ENCODE measurements at regions of chr12 and their contacts with region 1.

Region 1: DNA sequence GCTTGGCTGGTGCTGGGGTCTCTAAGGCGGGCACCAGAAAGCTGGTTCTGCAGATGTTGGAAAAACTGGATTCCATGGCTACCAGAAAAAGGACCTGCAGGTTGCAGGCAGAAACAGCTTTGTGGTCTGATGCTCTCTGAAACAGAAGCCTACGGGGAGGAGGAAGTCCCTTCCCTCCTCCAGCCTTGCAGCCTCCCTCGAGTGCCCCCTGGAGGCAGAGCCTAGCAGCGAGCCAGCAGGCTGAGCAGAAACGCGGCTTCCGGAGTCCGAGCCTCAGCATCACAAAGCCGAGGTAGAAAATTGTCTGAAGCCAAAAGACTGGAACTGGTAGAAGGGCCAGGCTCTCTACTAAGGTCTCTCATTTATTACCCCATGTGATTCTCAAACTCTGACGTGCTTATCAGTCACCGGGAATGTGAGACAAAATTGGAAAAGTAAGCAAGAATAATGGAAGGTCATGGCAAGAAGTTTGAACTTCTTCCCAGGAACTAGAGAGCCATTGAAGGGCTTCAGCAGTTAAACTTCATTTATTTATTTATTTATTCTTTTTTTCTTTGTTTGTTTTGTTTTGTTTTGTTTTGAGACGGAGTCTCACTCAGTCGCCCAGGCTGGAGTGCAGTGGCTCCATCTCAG is 82.2 kb upstream of the CPSF6 start:
- DNase-seq: peak; percentile 90 to 95 (median 95)
- ATAC-seq: peak; percentile 99
- H3K4me3 ChIP-seq: no peak overlapping the region
- H3K4me1 ChIP-seq: peaks cover 4% of the 10 kb centered on the region
- CTCF ChIP-seq: peak; percentile 96

Region 2: DNA sequence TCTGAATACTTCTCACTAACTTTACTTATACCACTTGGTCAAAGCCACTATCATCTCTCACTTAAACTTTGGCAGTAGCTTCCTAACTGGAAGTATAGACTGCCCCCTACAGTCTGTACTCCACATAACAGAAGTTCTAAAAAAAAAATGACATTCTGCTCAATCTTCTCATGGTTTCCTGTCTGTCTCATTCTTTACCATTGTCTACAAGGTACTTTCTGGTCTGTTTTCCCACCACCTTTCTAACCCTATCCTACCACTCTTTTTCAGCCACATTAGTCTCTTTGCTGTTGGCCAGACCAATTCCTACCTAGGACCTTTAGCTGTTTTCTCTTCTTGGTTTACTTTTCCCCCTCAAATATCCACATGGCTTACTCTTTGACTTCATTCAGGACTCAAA is 96.9 kb after region 1 on chr12:
- intact Hi-C with region 1: loop called in 1 of 2 experiments (anchors 10 kb)
- DNase-seq: peak in 1 of 3 donors; percentile 14
- ATAC-seq: peak; percentile 86
- H3K4me3 ChIP-seq: no peak overlapping the region
- H3K4me1 ChIP-seq: peaks cover 10% of the 10 kb centered on the region
- CTCF ChIP-seq: peak; percentile 43

Measured in mucosa of descending colon (tissue), 3 donors.